GM23248 (cell line): ENCODE measurements at regions of chr4 and their contacts with region 1.

Region 1: DNA sequence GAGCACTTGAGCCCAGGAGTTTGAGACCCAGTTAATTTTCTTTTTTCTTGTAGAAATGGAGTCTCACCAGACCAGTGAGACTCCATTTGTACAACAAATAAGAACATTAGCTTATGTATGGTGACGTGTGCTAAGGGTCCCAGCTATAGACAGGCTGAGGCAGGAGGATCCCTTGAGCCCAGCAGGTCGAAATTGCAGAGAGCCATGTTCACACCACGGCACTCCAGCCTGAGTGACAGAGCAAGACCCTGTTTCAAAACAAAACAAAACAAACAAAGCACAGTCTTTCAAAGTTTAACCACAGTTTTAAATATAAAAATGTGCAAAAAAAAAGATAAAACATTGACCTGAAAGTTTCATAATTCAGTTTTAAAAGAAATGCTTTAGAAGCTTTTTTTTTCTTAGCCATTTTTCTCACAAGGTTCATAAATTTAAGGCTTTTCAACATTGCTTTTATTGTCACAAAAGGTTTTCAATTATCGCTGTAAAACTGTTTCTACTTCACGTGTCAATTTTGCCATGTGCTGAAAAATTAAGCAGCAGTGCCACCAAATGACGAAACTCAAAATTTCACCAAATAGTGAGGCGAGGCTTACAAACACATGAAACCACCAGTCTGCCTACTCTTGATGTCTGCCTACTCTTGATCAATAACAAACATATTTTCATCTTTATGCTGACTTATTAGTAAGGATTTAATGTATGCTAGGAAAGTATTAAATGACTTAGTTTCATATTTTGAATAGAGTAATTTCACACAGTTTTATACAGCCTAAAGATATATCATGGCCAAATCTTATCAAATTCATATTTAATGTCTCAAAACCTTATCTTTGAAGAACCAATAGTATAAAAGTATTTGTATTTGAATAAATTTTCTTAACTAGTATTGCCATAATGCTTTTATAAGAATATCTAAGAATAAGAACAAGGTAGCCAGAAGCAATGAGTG is 126.3 kb downstream of the NEK1 start:
- DNase-seq: peak; percentile 77
- H3K4me3 ChIP-seq: peak overlapping the region; percentile 38; the same call in 1 of the 2 replicates
- H3K27ac ChIP-seq: no peak overlapping the region
- H3K4me1 ChIP-seq: peaks cover 17% of the 10 kb centered on the region
- H3K27me3 ChIP-seq: no peaks in the 10 kb centered on the region

Region 2: DNA sequence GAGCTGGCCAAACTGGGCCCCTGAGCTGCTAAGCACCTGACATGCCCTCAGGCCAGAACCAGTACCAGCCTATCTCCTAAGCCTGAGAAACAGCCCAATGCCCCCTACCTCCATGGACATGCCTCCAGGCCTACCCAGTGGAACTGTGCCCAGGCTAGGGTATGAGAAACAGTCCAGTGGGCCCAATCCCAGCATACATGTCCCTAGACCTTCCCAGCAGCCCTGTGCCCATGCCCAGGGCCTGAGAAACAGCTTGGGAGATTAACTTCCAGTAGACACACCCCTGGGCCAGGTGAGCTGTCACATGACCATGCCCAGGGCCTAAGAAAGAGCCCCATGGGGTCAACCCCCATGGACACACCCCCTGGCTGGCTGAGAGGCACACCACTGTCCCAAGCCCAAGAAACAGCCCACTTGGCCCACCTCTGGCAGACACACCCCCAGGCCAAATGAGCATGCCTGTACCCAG is 554.9 kb before region 1 on chr4:
- in situ Hi-C with region 1: loop called (anchors 10 kb)
- DNase-seq: no peak
- H3K4me3 ChIP-seq: no peak overlapping the region
- H3K27ac ChIP-seq: no peak overlapping the region
- H3K4me1 ChIP-seq: no peaks in the 10 kb centered on the region
- H3K27me3 ChIP-seq: no peaks in the 10 kb centered on the region

Region 3: DNA sequence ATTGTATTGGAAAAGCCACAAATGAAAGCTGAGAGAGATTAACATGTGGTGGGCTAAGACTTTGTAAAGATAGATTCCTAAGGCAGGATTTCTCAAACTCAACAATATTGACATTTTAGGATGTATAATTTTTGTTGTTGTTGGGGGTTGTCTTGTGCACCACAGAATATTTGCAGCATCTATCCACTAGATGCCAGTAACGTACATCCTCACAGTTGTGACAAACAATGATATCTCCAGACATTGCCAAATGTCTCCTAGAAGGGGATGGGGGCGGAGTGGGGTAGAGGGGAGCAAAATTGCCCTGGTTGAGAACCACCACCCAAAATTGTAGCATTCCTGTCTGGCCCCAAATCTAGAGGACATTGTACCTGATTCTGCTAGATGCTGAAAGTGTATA is 461.3 kb before region 1 on chr4:
- in situ Hi-C with region 1: loop called (anchors 5 kb)
- DNase-seq: peak; percentile 66
- H3K4me3 ChIP-seq: no peak overlapping the region
- H3K27ac ChIP-seq: no peak overlapping the region
- H3K4me1 ChIP-seq: no peaks in the 10 kb centered on the region
- H3K27me3 ChIP-seq: no peaks in the 10 kb centered on the region

Region 4: DNA sequence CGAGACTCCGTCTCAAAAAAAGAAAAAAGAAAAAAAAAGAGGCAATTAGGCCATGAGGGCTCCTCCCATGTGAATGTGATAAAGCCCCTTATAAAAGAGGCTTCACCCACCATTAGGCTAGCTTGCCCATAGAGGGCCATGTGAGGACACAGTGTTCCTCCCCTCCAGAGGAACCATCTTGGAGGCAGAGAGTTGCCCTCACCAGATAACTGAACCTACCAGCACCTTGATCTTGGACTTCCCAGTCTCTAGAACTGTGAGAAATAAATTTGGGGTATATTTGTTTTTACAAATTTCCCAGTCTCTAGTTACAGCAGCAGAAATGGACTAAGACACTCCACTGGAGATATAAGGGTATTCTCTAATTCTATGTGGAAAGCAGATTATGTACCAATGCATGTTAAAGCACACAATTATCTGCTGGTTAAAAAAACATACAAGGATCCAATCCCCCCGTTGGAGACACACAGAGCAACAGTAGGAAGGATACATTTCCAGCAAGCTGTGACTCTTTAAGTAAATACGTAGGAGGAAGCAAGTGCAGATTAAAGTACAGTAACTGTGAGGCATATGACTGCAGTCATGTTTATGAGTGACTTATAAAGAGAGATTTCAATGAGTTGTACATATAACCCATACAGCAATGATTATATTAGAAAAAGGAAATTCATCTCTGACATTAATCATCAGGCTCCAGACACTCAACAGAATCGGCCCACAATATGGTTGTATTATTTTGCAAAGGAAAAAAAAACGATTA is 236.7 kb before region 1 on chr4:
- in situ Hi-C with region 1: no loop called
- DNase-seq: peak; percentile 68
- H3K4me3 ChIP-seq: no peak overlapping the region
- H3K27ac ChIP-seq: peak overlapping the region; percentile 22; the same call in 1 of the 2 replicates
- H3K4me1 ChIP-seq: peaks cover 73% of the 10 kb centered on the region
- H3K27me3 ChIP-seq: no peaks in the 10 kb centered on the region